Mammary epithelial cell (primary cell): ENCODE measurements at regions of chr19 and their contacts with region 1.

Region 1: GRCh38 chr19:43433358-43433673 is 18.6 kb downstream of the TEX101 start:
- DNase-seq: no peak
- H3K4me3 ChIP-seq: no peak overlapping the region
- H3K27ac ChIP-seq: no peak overlapping the region
- H3K4me1 ChIP-seq: peaks cover 2% of the 10 kb centered on the region
- H3K27me3 ChIP-seq: no peaks in the 10 kb centered on the region
- CTCF ChIP-seq: no peak

Region 2: GRCh38 chr19:43519436-43520088 is 86.2 kb after region 1 on chr19:
- CTCF ChIA-PET with region 1: interaction called, 14 read pairs
- dilution Hi-C with region 1: no loop called
- in situ Hi-C with region 1: no loop called
- intact Hi-C with region 1: loop called (anchors 1 kb)
- DNase-seq: peak; percentile 93
- H3K4me3 ChIP-seq: no peak overlapping the region
- H3K27ac ChIP-seq: peak overlapping the region; percentile 71
- H3K4me1 ChIP-seq: peaks cover 16% of the 10 kb centered on the region
- H3K27me3 ChIP-seq: no peaks in the 10 kb centered on the region
- CTCF ChIP-seq: peak; percentile 87 to 88